AG04449 (cell line): ENCODE measurements at regions of chr4 and their contacts with region 1.

Region 1: GRCh38 chr4:52545099-52546069 is 113.7 kb downstream of the USP46 start:
- DNase-seq: no peak
- H3K4me3 ChIP-seq: no peak overlapping the region
- CTCF ChIP-seq: peak; percentile 96

Region 2: DNA sequence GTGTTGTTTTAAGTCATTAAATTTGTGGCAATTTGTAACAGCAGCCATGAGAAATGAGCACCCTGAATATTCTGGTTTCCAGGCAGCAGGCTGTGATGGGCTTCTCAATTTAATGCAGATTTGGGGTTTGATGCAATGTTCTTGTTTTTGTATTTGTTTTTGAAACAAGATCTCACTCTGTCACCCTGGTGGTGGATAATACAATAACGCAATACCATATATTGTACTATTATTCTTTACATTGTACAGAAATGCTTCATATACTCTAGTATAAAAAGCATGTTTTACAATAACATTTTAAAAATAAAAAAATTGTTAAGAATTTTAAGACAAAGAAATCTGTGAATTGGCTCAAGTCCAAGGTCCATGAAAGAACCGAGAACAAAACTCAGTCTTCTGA is 15.4 kb before region 1 on chr4:
- CTCF ChIA-PET with region 1: interaction called, 10 read pairs
- POLR2A ChIA-PET with region 1: no interaction called
- DNase-seq: no peak
- H3K4me3 ChIP-seq: no peak overlapping the region
- CTCF ChIP-seq: no peak

Region 3: DNA sequence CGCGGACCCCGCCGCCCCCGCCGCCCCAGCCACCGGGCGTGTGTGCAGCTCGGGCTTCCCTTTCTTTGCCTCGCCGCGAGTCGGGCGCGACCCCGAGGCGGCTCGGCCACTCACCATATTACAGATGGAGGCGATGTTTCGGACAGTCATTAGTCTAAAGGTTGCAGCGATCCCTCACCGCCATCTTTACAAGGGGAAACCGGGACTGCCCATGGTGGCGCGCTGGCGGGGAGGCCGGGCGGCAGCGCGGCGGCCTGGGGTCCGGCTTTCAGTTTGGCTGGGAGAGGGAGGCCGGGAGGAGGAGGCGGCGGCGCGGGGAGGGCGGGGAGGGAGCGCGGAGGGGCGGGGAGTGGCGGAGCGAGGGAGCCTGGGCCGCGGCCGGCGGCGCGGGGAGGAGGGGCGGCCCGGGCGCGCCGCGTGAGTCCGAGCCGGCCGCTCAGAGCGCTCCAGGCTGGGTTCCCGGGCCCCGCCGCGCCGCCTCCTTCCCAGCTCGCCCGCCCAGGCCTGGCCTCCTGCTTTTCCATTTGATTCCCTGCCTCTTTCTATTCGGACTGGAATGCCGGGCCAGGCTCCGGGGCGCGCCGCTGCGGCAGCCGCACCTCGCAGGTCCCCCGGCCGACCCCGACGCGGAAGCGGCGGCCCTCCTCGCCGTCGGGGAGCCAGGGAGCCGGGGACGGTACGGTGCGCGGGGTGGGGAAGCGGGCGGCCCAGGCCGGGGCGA is 113.8 kb after region 1 on chr4 and contains the start of gene USP46:
- CTCF ChIA-PET with region 1: interaction called, 21 read pairs
- POLR2A ChIA-PET with region 1: interaction called, 3 read pairs
- DNase-seq: no peak
- H3K4me3 ChIP-seq: peak within 1 kb of the TSS; percentile 76
- CTCF ChIP-seq: no peak

Region 4: DNA sequence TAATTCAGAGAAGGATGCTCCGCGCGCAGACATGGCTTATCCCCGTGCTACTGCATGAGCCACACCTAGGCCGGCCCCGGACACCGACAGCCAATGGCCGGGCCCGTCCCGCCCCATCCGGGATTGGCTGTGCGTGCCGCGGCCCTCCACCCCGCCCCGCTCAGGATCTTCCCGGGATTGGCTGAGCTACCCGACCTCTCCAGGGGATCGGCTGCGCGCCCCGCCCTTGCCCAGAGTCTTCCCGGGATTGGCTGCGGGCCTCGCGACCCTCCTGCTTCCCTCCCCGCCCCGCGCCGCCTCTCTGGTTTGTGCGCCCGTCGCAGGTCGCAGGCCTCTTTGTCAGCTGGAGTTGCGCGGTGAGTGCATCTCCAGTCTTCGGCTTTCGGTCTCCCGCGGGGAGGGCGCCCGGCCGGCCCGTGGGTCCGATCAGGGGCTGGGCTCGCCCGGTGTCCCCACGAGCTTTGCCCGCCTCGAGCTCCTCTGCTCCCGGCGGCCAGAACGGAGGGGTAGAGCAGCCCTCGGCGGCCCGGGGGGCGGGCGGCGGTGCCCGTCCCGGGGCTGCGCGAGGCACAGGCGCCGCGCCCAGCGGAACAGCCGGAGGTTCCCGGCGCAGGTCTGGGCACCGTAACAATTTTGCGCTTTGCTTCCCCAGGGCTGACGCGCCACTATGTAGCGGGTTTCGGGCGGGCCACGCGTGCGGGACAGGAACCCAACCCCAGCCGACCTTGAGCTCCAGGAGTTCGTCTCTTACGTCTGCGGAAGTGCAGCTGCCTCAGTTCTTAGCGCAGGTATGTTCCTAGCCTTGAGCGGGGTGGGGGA is 167.0 kb after region 1 on chr4:
- CTCF ChIA-PET with region 1: interaction called, 29 read pairs
- POLR2A ChIA-PET with region 1: interaction called, 4 read pairs
- DNase-seq: peak; percentile 52
- H3K4me3 ChIP-seq: peak overlapping the region; percentile 86
- CTCF ChIP-seq: no peak

Region 5: GRCh38 chr4:52837726-52838558 is 292.6 kb after region 1 on chr4:
- CTCF ChIA-PET with region 1: interaction called, 10 read pairs
- POLR2A ChIA-PET with region 1: no interaction called
- DNase-seq: no peak
- H3K4me3 ChIP-seq: no peak overlapping the region
- CTCF ChIP-seq: no peak

Region 6: GRCh38 chr4:52983563-52984303 is 438.3 kb after region 1 on chr4:
- CTCF ChIA-PET with region 1: interaction called, 334 read pairs
- POLR2A ChIA-PET with region 1: no interaction called
- DNase-seq: no peak
- H3K4me3 ChIP-seq: no peak overlapping the region
- CTCF ChIP-seq: peak; percentile 56